Heart right ventricle (tissue), 16 donors: ENCODE measurements at regions of chr2 and their contacts with region 1.

Region 1: GRCh38 chr2:129849559-129850160 is 129.8 kb upstream of the RAB6C start:
- DNase-seq: no peak
- ATAC-seq: peak in 1 of 8 donors; percentile 33
- H3K4me3 ChIP-seq: no peak overlapping the region
- H3K27ac ChIP-seq: no peak overlapping the region
- H3K4me1 ChIP-seq: peaks cover 0 to 3% (median 0%) of the 10 kb centered on the region in 9 donors
- H3K27me3 ChIP-seq: peaks cover 0 to 11% (median 0%) of the 10 kb centered on the region in 7 donors
- CTCF ChIP-seq: peak; percentile 57 to 82 (median 73)

Region 2: DNA sequence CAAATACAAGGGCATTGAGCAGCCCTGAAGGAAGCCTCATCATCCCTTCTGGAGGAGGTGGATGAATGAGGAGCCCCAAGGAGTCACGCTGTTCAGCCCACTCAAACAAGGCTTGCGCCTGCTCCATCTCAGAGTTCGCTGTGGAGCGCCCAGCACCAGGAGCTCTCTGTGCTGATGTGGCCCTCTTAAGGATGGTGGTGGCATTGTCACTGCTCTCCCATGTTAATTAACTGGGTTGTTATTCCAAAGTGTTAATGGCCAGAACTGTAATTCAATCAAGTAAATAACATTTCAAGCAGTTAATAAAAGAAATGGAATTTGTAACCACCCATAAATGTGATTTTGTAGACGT is 596.2 kb before region 1 on chr2:
- intact Hi-C with region 1: loop called in 1 of 10 experiments (anchors 5 kb)
- DNase-seq: no peak
- ATAC-seq: peak in 3 of 8 donors; percentile 52 to 79 (median 55)
- H3K4me3 ChIP-seq: no peak overlapping the region
- H3K27ac ChIP-seq: no peak overlapping the region
- H3K4me1 ChIP-seq: no peaks in the 10 kb centered on the region
- H3K27me3 ChIP-seq: no peaks in the 10 kb centered on the region
- CTCF ChIP-seq: peak in 7 of 9 donors; percentile 24 to 52 (median 40)